H1 (cell line): ENCODE measurements at regions of chr10 and their contacts with region 1.

Region 1: DNA sequence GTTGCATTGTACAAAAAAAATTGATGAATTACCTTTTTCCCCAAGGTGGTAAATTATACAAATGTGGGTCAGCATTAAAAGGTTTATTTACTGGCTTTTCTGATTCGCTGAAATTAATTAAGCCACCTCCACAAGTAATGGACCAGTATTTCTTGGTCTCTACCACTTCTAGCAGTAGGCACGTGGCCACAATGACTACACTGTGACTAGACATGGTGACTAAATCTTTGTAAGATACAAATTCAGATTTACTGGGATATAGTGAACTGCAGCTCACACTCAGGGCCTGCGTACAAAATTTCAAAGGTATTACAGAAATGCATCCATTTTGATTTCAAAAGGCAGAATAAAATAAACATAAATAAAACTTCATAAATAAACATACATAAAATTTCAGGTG is 10.9 kb downstream of the HPSE2 start:
- DNase-seq: no peak
- H3K4me3 ChIP-seq: no peak overlapping the region
- H3K27ac ChIP-seq: no peak overlapping the region
- H3K4me1 ChIP-seq: no peaks in the 10 kb centered on the region
- H3K27me3 ChIP-seq: peaks cover 0 to 4% (median 2%) of the 10 kb centered on the region in 4 experiments; a peak in 4 of 7 replicates
- CTCF ChIP-seq: no peak
- EP300 ChIP-seq: no peak
- POLR2A ChIP-seq: no peak
- RAD21 ChIP-seq: no peak

Region 2: DNA sequence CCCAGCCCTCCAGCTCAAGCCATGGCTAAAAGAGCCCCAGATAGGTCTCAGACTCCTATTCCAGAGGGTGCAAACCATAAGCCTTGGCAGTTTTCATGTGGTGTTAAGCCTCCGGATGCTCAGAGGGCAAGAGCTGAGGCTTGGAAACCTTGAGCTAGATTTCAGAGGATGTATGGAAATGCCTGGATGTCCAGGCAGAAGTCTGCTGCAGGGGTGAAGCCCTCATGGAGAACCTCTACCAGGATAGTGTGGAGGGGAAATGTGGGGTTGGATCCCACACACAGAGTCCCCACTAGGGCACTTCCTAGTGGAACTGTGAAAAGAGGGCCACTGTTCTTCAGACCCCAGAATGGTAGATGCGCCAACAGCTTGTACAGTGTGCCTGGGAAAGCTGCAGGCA is 24.1 kb after region 1 on chr10:
- CTCF ChIA-PET with region 1: interaction called, 10 read pairs
- POLR2A ChIA-PET with region 1: no interaction called
- DNase-seq: no peak
- H3K4me3 ChIP-seq: no peak overlapping the region
- H3K27ac ChIP-seq: no peak overlapping the region
- H3K4me1 ChIP-seq: no peaks in the 10 kb centered on the region
- H3K27me3 ChIP-seq: peaks cover 0 to 1% (median 0%) of the 10 kb centered on the region in 4 experiments; a peak in 1 of 7 replicates
- CTCF ChIP-seq: no peak
- EP300 ChIP-seq: no peak
- POLR2A ChIP-seq: no peak
- RAD21 ChIP-seq: no peak